ENCODE measurements at regions of chr15 and their contacts with region 1.

Region 1: DNA sequence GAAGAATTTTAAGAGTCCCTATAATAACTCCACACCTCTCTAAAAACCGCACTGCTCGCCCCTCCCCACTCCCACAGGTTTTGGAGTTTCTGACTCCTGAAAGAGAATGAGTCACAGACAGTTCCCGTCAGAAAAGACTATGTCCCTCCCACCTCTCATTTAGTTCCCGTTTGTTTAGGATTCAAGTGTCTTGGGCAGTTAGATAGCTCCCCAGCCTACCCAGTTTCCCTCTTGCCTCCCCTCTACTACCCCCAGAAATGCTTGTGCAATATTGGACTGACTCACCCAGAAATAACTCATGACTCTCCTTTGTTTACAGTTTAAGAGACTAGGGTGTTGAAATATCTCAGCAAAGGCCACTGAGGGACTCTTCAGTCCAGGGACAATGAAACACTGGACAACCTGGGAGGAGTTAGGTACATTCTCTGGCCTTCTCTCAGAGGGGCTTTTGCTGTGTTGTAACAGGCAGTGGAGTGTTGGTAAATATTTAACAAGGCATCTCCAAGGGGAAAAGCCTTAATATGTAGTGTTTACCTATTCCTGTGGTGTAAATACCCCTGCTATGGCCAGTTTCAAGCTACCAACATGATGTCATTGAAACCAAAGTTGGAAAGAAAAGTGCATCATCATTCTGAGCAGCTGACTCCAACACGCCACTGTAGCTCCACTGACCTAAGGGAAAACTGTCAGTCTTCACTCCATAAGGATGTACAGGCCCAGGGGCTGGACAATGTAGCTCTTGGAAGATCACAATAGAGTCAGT is 96.1 kb upstream of the CHD2 start:
- DNase-seq: peak; percentile 99
- H3K4me3 ChIP-seq: no peak overlapping the region
- CTCF ChIP-seq: no peak

Region 2: GRCh38 chr15:92899948-92900708 is 96.1 kb after region 1 on chr15 and contains the start of gene CHD2:
- in situ Hi-C with region 1: loop called (anchors 5 kb)
- DNase-seq: peak; percentile 78
- H3K4me3 ChIP-seq: peak within 1 kb of the TSS; percentile 74
- CTCF ChIP-seq: no peak

Region 3: GRCh38 chr15:92954578-92954977 is 150.6 kb after region 1 on chr15:
- in situ Hi-C with region 1: no loop called
- DNase-seq: no peak
- H3K4me3 ChIP-seq: no peak overlapping the region
- CTCF ChIP-seq: peak; percentile 24